PC-3 (cell line): ENCODE measurements at regions of chr4 and their contacts with region 1.

Region 1: DNA sequence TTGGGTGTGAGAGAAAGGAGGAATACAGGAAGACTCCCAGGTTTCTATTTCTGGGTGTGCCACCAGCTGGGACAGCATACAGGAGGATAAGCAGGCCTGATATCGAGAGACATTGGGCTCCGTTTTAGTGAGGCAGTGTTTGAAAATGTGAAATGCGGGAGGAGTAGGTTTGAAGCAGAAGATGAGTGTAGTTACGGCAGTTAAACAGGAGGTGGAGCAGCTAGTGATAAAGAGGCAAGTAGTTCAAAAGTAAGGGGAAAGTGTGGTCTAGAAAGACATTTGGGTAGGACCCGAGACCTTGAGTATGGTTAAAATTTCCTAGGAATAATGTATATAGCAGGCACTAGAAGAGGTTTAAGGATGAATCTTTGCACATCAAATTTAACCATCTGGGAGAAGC is 42.4 kb downstream of the DCUN1D4 start:
- DNase-seq: peak; percentile 49
- ATAC-seq: peak; percentile 73; the same call in 1 of the 2 replicates
- H3K4me3 ChIP-seq: no peak overlapping the region
- H3K27ac ChIP-seq: no peak overlapping the region
- H3K4me1 ChIP-seq: no peaks in the 10 kb centered on the region
- H3K27me3 ChIP-seq: no peaks in the 10 kb centered on the region
- CTCF ChIP-seq: peak; percentile 69

Region 2: DNA sequence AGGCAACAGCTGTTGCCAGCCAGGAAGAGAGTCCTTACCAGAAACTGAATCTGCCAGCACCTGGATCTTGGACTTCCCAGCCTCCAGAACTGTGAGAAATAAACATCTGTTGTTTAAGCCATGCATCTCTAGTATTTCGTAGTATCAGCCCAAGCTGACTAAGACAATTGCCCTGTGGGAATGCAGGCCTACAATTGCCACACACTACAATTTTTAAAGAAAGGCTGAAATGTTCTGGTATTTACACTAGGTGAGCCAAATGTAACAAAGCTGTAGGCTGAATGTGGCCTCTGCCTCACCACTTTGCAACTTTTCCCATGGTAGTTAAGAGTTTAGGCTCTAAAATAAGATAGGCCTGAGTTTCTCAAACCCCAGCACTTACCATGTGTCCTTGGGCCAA is 224.8 kb after region 1 on chr4:
- CTCF ChIA-PET with region 1: no interaction called
- POLR2A ChIA-PET with region 1: no interaction called
- intact Hi-C with region 1: no loop called
- DNase-seq: no peak
- ATAC-seq: no peak
- H3K4me3 ChIP-seq: no peak overlapping the region
- H3K27ac ChIP-seq: no peak overlapping the region
- H3K4me1 ChIP-seq: peaks cover 16% of the 10 kb centered on the region
- H3K27me3 ChIP-seq: no peaks in the 10 kb centered on the region
- CTCF ChIP-seq: no peak

Region 3: GRCh38 chr4:52135171-52135570 is 249.8 kb after region 1 on chr4:
- CTCF ChIA-PET with region 1: no interaction called
- POLR2A ChIA-PET with region 1: no interaction called
- intact Hi-C with region 1: loop called (anchors 2 kb)
- DNase-seq: no peak
- ATAC-seq: no peak
- H3K4me3 ChIP-seq: no peak overlapping the region
- H3K27ac ChIP-seq: no peak overlapping the region
- H3K4me1 ChIP-seq: no peaks in the 10 kb centered on the region
- H3K27me3 ChIP-seq: 0 out of 2 replicates have a peak, but pooled peaks cover 11% of the 10 kb centered on the region
- CTCF ChIP-seq: no peak

Region 4: DNA sequence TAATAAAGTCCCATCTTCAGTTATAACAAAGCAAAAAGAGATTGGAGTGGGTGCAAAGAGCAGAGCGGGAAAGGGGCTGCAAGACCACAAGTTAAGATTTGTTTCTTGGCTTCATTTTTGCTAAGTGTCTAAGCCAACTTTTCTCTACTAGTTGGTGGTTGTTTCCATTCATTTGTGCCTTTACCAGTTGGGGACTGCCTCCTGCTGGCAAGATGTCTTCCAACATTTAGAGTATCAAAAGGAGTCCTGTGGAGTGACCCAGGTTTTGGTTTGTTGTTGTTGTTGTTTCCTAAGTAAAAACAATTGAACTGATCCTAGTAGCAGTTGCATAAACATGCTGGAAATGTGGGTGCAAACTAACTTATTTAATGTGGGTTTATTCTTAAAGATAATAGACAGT is 286.8 kb after region 1 on chr4:
- CTCF ChIA-PET with region 1: no interaction called
- POLR2A ChIA-PET with region 1: no interaction called
- intact Hi-C with region 1: no loop called
- DNase-seq: peak; percentile 46
- ATAC-seq: no peak
- H3K4me3 ChIP-seq: no peak overlapping the region
- H3K27ac ChIP-seq: no peak overlapping the region
- H3K4me1 ChIP-seq: no peaks in the 10 kb centered on the region
- H3K27me3 ChIP-seq: no peaks in the 10 kb centered on the region
- CTCF ChIP-seq: peak; percentile 61; the same call in 1 of the 2 replicates